ENCODE measurements at regions of chr1 and their contacts with region 1.

Region 1: DNA sequence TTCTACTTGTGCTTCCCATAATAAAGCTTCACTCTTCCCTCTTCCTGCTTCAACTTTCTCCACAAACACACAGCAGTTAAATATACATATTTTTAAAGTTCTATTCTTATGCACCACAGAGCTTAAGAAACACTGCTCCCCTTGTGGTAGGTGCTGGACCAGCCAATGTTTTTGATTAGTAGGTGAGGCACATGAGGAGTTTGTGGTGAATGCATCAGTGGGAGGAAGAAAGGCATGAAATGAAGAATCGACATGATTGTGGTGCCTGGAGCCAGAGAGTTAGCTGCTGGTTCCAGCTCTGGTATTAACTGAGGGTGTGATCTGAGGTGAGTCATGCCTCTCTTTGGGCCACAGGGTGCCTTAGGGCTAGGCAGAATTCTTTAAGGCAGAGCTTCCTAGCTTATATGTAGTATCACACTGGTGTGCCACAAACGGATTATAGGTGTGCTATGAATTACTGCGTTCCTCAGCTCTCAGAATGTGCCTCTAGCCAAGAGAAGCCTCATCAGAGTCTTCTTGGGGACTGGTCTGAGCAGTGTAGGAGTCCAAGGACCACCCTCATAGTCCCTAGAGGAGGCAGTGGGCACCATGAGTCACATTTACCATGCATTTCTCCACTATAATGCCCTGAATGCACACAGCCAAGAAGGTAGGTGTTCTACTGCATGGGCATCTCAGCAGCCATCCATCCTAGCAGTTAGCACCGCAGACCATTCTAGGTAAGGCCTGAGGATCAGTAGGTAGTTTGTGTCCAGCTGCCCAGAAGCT is 97.4 kb upstream of the SGIP1 start:
- DNase-seq: peak; percentile 34
- H3K4me3 Mint-ChIP-seq: no peak overlapping the region
- H3K27ac Mint-ChIP-seq: peak overlapping the region; percentile 2
- H3K4me1 Mint-ChIP-seq: peaks cover 45% of the 10 kb centered on the region
- H3K27me3 Mint-ChIP-seq: no peaks in the 10 kb centered on the region

Region 2: DNA sequence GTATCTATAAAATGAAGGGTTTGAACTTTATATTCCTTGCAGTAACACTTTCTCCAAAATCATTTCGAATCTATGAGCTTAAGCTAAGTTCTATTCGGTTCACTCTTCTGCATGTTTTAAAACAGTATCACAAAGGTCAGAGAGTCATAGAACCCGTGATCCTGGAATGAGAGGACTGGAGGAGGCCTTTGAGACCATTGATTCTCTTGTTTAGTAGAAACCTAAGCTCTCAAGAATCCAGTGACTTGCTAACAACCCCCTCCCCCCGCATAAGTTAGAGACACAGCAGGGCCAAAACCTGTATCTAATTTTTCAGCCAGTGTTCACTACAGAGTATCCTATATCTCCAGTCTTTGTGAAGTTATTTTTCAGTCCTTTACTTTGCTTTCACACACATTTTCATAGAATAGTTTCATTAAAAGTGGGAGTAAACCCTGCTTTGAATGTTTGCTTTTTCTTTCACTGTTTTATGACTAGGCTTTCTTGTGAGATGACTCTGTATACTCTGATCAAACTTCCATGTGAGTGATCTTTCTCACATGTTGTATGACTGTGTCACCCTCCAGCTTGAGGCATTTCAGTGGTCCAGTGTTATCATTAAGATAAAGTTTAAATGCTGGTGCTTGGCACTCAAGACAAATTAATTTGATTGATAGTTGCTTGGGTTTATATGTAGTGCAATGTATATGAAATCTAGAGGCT is 178.0 kb before region 1 on chr1:
- intact Hi-C with region 1: loop called (anchors 1 kb)
- DNase-seq: no peak
- H3K4me3 Mint-ChIP-seq: no peak overlapping the region
- H3K27ac Mint-ChIP-seq: peak overlapping the region; percentile 53
- H3K4me1 Mint-ChIP-seq: peaks cover 83% of the 10 kb centered on the region
- H3K27me3 Mint-ChIP-seq: peaks cover 2% of the 10 kb centered on the region

Region 3: GRCh38 chr1:66399888-66400529 is 36.6 kb before region 1 on chr1:
- intact Hi-C with region 1: loop called (anchors 1 kb)
- DNase-seq: no peak
- H3K4me3 Mint-ChIP-seq: peak overlapping the region; percentile 67
- H3K27ac Mint-ChIP-seq: peak overlapping the region; percentile 88
- H3K4me1 Mint-ChIP-seq: peaks cover 47% of the 10 kb centered on the region
- H3K27me3 Mint-ChIP-seq: no peaks in the 10 kb centered on the region

Region 4: DNA sequence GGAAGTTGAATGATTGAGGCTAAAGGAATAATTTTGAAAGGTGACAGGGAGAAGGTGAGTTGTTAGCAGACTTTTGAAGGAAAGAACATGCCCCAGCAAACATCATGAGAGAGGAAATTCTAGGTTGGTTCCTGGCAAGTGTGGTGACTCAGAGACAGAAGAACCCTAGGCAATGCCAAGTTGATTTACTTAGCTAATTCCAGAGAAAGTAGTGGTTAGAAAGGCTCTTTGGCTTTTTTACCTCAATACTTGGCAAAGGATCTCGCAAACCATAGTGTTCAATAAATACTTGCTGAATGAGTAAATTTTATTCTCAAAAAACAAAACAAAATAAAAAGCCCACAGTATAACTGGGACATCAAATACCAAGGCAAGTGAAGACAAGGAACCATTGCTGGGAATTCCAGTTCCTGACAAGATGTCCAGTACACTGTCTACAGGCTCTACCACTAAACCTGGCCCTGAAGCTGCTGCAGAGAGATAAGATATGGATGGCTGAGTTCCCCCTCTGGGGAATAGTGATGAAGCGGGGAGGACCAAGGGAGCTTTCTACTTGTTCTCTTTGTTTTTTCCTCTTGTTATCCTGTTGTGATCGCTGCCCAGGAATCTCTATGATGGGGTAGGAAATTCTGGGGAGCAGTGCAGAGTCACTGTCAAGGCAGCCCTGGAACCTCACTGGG is 919.3 kb after region 1 on chr1:
- intact Hi-C with region 1: no loop called
- DNase-seq: no peak
- H3K4me3 Mint-ChIP-seq: no peak overlapping the region
- H3K27ac Mint-ChIP-seq: peak overlapping the region; percentile 62
- H3K4me1 Mint-ChIP-seq: peaks cover 61% of the 10 kb centered on the region
- H3K27me3 Mint-ChIP-seq: no peaks in the 10 kb centered on the region